Endothelial cell of umbilical vein (primary cell): ENCODE measurements at regions of chr3 and their contacts with region 1.

Region 1: DNA sequence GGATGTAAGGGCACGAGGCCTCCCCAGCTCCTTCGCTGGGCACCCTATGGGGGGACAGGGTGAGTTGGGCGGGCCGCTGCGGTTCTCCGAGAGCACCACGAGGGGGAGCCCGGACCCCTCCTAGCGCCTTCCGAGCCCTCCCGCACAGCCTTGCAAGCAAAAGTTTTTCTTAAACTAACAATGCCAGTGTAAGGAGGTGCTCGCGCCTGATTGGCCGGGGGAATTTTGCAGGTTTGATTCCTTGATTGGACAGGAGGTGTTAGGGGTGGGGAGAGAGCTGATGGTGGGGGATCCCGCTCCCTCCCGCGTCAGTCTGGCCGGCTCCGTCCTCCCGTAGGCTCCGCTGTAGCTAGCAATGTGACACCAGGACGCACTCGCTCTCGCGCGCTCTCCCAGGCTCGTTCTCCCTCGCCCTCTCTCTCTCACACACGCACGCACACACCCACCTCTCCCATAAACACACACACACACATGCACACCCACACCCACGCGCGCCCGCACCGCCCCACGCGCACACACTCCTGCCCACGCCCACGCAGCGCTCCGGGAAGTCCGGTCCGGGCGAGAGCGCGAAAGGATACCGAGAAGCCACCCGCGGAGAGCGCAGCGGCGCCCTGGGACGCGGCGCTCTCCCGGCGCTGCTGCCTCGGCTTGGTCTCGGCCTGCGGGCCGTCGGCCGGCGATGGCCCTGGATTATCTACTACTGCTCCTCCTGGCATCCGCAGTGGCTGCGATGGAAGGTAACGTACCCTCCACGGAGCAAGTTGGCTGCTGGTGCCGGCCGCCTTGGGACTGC is at the start of gene EPHB1:
- DNase-seq: peak; percentile 96
- H3K4me3 ChIP-seq: peak within 1 kb of the TSS in 2 of 3 experiments; percentile 47 to 56
- H3K27ac ChIP-seq: no peak within 1 kb of the TSS
- H3K4me1 ChIP-seq: peaks cover 12% of the 10 kb centered on the region
- H3K27me3 ChIP-seq: peaks cover 25 to 35% of the 10 kb centered on the region in 2 experiments
- CTCF ChIP-seq: peak; percentile 88 to 95
- POLR2A ChIP-seq: peak; percentile 18
- total RNA-seq, gene EPHB1: 2.5 and 5.2 TPM in 2 replicates

Region 2: GRCh38 chr3:134709561-134710312 is 85.4 kb before region 1 on chr3:
- CTCF ChIA-PET with region 1: no interaction called
- POLR2A ChIA-PET with region 1: no interaction called
- dilution Hi-C with region 1: no loop called
- intact Hi-C with region 1: no loop called
- DNase-seq: no peak
- H3K4me3 ChIP-seq: no peak overlapping the region
- H3K27ac ChIP-seq: no peak overlapping the region
- H3K4me1 ChIP-seq: peaks cover 17% of the 10 kb centered on the region
- H3K27me3 ChIP-seq: no peaks in the 10 kb centered on the region
- CTCF ChIP-seq: no peak
- POLR2A ChIP-seq: no peak

Region 3: GRCh38 chr3:134838599-134838998 is 43.5 kb after region 1 on chr3:
- CTCF ChIA-PET with region 1: interaction called, 12 read pairs
- POLR2A ChIA-PET with region 1: no interaction called
- dilution Hi-C with region 1: no loop called
- intact Hi-C with region 1: no loop called
- DNase-seq: no peak
- H3K4me3 ChIP-seq: no peak overlapping the region
- H3K27ac ChIP-seq: no peak overlapping the region
- H3K4me1 ChIP-seq: no peaks in the 10 kb centered on the region
- H3K27me3 ChIP-seq: no peaks in the 10 kb centered on the region
- CTCF ChIP-seq: no peak
- POLR2A ChIP-seq: no peak

Region 4: DNA sequence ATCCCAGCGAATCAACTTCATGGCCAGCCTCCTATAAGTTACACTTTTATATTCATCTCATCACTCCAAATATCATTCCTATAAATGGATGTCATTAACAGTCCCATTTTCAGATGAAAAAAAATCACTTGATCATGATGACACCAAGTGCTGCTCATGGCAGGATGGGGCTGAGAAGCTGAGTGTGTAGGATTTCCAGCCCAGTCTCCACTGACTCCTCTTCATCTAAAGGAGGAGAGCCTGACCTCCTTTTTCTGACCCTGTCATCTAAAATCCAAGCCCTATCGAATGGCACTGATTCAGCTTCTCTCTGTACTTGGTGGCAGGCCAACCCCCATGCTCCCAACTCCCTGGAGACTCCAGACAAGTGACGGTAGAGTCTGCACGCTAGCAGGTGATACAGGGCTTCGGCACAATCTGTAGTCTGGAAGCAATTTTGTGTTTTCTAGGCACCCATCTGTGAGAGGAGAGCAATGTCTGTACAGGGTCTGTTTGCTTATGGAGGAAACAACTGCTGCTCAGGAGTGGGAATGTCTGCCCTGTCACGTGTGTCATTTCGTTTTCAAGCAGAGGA is 103.1 kb after region 1 on chr3:
- CTCF ChIA-PET with region 1: interaction called, 8 read pairs
- POLR2A ChIA-PET with region 1: no interaction called
- dilution Hi-C with region 1: no loop called
- intact Hi-C with region 1: loop called (anchors 2 kb)
- DNase-seq: no peak
- H3K4me3 ChIP-seq: no peak overlapping the region
- H3K27ac ChIP-seq: no peak overlapping the region
- H3K4me1 ChIP-seq: no peaks in the 10 kb centered on the region
- H3K27me3 ChIP-seq: no peaks in the 10 kb centered on the region
- CTCF ChIP-seq: no peak
- POLR2A ChIP-seq: no peak

Region 5: DNA sequence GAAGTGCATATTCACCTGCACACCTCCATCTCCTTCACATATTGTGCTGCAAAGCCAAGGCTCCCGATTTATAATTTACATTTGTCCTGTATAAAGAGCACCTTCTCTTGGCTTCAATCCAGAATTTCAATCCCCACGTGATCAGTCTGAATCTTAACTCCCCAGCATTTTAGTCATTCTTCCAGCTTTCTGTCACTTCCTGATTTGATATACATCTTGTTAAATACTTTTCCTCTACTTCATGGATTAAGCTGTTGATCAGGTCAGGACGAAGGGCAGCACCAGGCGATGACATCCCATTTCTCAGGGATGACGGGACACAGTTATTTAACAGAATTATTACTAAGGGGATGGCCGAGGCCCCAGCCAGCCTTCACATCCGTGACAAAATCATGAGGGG is 212.5 kb after region 1 on chr3:
- CTCF ChIA-PET with region 1: no interaction called
- POLR2A ChIA-PET with region 1: no interaction called
- dilution Hi-C with region 1: no loop called
- intact Hi-C with region 1: loop called (anchors 5 kb)
- DNase-seq: peak; percentile 5
- H3K4me3 ChIP-seq: no peak overlapping the region
- H3K27ac ChIP-seq: no peak overlapping the region
- H3K4me1 ChIP-seq: no peaks in the 10 kb centered on the region
- H3K27me3 ChIP-seq: no peaks in the 10 kb centered on the region
- CTCF ChIP-seq: no peak
- POLR2A ChIP-seq: no peak

Region 6: GRCh38 chr3:135503760-135504686 is 708.9 kb after region 1 on chr3:
- CTCF ChIA-PET with region 1: interaction called, 62 read pairs
- POLR2A ChIA-PET with region 1: no interaction called
- dilution Hi-C with region 1: no loop called
- intact Hi-C with region 1: loop called (anchors 1 kb)
- DNase-seq: peak; percentile 38
- H3K4me3 ChIP-seq: no peak overlapping the region
- H3K27ac ChIP-seq: no peak overlapping the region
- H3K4me1 ChIP-seq: no peaks in the 10 kb centered on the region
- H3K27me3 ChIP-seq: no peaks in the 10 kb centered on the region
- CTCF ChIP-seq: peak; percentile 49 to 54
- POLR2A ChIP-seq: no peak

Region 7: GRCh38 chr3:135895106-135895733 is 1100.1 kb after region 1 on chr3:
- CTCF ChIA-PET with region 1: interaction called, 85 read pairs
- POLR2A ChIA-PET with region 1: no interaction called
- dilution Hi-C with region 1: no loop called
- intact Hi-C with region 1: loop called (anchors 1 kb)
- DNase-seq: peak; percentile 78
- H3K4me3 ChIP-seq: no peak overlapping the region
- H3K27ac ChIP-seq: no peak overlapping the region
- H3K4me1 ChIP-seq: no peaks in the 10 kb centered on the region
- H3K27me3 ChIP-seq: peaks cover 0 to 2% of the 10 kb centered on the region in 2 experiments
- CTCF ChIP-seq: peak; percentile 77 to 88
- POLR2A ChIP-seq: no peak